KBM-7 (cell line): ENCODE measurements at regions of chr12 and their contacts with region 1.

Region 1: GRCh38 chr12:31629756-31630732 is 29.4 kb upstream of the ETFBKMT start:
- DNase-seq: no peak

Region 2: GRCh38 chr12:31250179-31250578 is 379.9 kb before region 1 on chr12:
- in situ Hi-C with region 1: loop called (anchors 25 kb)
- DNase-seq: no peak

Region 3: GRCh38 chr12:31406345-31406744 is 223.7 kb before region 1 on chr12:
- in situ Hi-C with region 1: loop called (anchors 25 kb)
- DNase-seq: no peak

Region 4: GRCh38 chr12:31524791-31525495 is 105.1 kb before region 1 on chr12:
- in situ Hi-C with region 1: no loop called
- DNase-seq: no peak

Region 5: GRCh38 chr12:32051559-32052414 is 421.7 kb after region 1 on chr12:
- in situ Hi-C with region 1: no loop called
- DNase-seq: peak; percentile 61